Activated CD4-positive, alpha-beta T cell treated with anti-CD3 and anti-CD28 coated beads for 36 hours (primary cell): ENCODE measurements at regions of chr22 and their contacts with region 1.

Region 1: GRCh38 chr22:37166675-37167066 is 17.0 kb upstream of the IL2RB start:
- DNase-seq: peak; percentile 92
- ATAC-seq: peak; percentile 20
- H3K4me3 Mint-ChIP-seq: peak overlapping the region; percentile 53
- H3K27ac Mint-ChIP-seq: peak overlapping the region; percentile 82
- H3K4me1 Mint-ChIP-seq: peaks cover 71% of the 10 kb centered on the region
- H3K27me3 Mint-ChIP-seq: no peaks in the 10 kb centered on the region

Region 2: DNA sequence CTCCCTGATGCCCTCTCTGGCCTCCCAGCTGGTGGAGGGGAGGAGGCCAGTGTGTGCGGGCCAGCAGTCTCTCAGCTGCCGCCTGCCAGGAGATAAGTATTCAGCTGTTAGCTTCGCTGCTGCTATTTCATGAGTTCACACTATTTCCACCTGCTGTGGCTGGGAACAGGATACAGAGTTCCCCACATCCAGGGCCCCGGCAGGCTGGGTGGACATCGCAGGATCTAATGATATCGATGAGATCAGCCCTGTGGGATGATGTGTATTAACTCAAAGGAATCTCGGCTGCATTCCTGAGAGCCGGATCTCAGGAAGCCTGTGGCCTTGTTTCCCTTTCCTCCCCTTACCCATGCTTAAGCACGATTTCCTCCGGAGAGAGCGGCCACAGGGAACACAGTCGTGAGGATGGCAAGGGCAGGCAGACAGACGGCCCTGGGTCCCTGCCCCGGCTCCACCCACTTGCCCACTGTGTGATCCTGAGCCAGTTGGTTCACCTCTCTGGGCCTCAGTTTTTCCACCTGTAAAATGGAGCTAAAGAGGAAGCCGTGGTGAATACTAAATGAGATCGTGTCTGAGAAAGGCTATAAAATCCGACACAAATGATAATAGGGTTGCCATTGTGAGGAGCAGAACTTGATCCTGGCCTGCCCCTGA is 343.4 kb before region 1 on chr22:
- CTCF ChIA-PET with region 1: no interaction called
- POLR2A ChIA-PET with region 1: no interaction called
- intact Hi-C with region 1: no loop called
- DNase-seq: no peak
- ATAC-seq: no peak
- H3K4me3 Mint-ChIP-seq: no peak overlapping the region
- H3K27ac Mint-ChIP-seq: no peak overlapping the region
- H3K4me1 Mint-ChIP-seq: no peaks in the 10 kb centered on the region
- H3K27me3 Mint-ChIP-seq: peaks cover 21% of the 10 kb centered on the region

Region 3: GRCh38 chr22:37060801-37061610 is 105.7 kb before region 1 on chr22:
- CTCF ChIA-PET with region 1: no interaction called
- POLR2A ChIA-PET with region 1: no interaction called
- intact Hi-C with region 1: loop called in 1 of 2 experiments (anchors 1 kb)
- DNase-seq: peak; percentile 90
- ATAC-seq: peak; percentile 85
- H3K4me3 Mint-ChIP-seq: peak overlapping the region; percentile 66
- H3K27ac Mint-ChIP-seq: peak overlapping the region; percentile 80
- H3K4me1 Mint-ChIP-seq: peaks cover 34% of the 10 kb centered on the region
- H3K27me3 Mint-ChIP-seq: no peaks in the 10 kb centered on the region

Region 4: GRCh38 chr22:37095113-37095512 is 71.6 kb before region 1 on chr22:
- CTCF ChIA-PET with region 1: no interaction called
- POLR2A ChIA-PET with region 1: no interaction called
- intact Hi-C with region 1: loop called in 1 of 2 experiments (anchors 1 kb)
- DNase-seq: peak; percentile 87
- ATAC-seq: peak; percentile 87
- H3K4me3 Mint-ChIP-seq: no peak overlapping the region
- H3K27ac Mint-ChIP-seq: peak overlapping the region; percentile 79
- H3K4me1 Mint-ChIP-seq: peaks cover 31% of the 10 kb centered on the region
- H3K27me3 Mint-ChIP-seq: peaks cover 11% of the 10 kb centered on the region

Region 5: DNA sequence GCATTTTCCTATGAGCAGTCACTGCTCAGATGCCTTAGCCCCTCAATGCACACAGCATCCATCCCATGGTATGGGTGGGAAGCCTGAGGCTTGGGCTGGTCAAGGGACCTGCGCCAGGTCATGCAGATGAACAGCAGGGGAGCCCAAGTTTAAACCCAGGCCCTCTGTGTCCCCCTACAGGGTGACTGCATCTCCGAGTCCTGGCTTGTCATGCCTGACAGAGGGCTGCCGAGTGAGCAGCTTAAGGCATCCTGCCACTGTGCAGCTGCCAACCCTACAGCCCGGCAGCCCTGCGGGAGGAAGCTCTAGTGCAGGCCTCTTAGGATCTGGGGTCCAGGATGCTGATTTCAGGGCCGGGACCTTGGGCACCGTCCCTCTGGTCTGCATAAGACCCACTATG is 26.9 kb before region 1 on chr22:
- CTCF ChIA-PET with region 1: interaction called, 18 read pairs
- POLR2A ChIA-PET with region 1: interaction called, 4 read pairs
- intact Hi-C with region 1: loop called in 1 of 2 experiments (anchors 1 kb)
- DNase-seq: no peak
- ATAC-seq: no peak
- H3K4me3 Mint-ChIP-seq: no peak overlapping the region
- H3K27ac Mint-ChIP-seq: peak overlapping the region; percentile 93
- H3K4me1 Mint-ChIP-seq: peaks cover 56% of the 10 kb centered on the region
- H3K27me3 Mint-ChIP-seq: no peaks in the 10 kb centered on the region

Region 6: DNA sequence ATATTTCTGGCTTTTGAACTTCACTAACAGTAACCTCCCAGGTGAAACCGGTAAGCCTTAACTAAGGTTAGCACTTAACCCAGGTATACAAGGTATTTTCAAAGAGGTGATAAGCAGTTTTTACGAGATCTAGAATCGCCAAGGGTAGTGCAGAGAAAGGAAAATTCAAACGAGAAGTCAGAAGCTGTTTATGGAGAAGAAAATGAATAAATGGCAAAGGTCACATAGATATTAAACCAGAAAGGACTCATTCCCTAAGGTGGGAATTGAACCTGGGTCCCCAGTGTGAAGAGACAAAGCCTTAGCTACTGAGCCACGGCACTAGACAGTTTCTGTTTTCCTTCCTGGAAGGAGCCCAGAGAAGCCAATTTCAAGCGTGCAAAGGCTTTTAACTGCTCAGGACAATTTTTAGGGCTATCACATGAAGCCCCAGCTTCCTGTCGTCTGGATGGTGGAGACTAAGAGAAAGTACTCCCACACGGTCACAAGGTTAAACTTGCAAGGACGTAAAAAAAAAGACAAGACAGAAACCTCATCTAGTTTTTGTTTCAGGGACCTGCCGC is 27.0 kb after region 1 on chr22:
- CTCF ChIA-PET with region 1: interaction called, 36 read pairs
- POLR2A ChIA-PET with region 1: interaction called, 5 read pairs
- intact Hi-C with region 1: loop called (anchors 1 kb)
- DNase-seq: peak; percentile 59
- ATAC-seq: peak; percentile 42
- H3K4me3 Mint-ChIP-seq: peak overlapping the region; percentile 40
- H3K27ac Mint-ChIP-seq: peak overlapping the region; percentile 82
- H3K4me1 Mint-ChIP-seq: peaks cover 38% of the 10 kb centered on the region
- H3K27me3 Mint-ChIP-seq: no peaks in the 10 kb centered on the region

Region 7: DNA sequence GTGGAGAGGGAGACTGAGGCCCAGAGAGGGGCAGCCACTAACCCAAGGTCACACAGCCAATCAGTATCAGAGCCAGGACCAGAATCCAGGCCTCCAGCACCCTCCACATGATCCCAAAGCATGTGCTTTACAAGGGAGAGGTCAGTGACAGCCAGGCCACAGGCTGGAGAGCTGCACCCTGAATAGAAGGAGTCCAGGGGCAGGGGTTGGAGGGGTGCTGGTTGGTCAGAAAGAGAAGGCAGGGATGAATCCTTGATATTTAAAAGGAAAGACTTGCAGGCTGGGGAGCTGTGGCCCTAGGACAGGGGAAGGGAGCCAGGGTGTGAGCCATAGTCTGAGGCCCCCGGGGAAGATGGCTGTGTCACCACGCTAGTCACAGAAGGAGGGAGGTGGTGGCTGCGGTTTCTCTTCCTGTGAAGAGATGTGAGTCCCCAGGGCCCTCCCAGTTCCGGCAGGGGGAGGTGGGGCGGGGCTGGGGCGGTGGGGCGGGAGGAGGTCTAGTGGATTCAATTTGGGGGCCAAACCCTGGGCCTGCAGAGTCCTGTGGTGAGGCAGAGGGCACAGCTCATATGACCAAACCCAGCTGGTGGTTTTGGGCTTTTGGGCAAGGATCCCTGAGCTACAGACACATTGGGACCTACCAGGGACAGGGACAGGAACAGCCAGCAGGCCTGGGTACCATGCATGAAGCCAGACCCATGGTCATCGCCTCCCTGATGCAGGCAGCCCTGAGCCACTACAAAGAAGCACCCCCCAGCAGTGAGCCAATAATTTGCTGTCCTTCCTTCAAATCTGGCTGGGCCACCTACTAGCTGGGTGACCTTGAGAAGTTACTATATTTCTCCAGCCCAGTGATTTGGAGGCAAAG is 63.4 kb after region 1 on chr22:
- CTCF ChIA-PET with region 1: interaction called, 3 read pairs
- POLR2A ChIA-PET with region 1: interaction called, 3 read pairs
- intact Hi-C with region 1: loop called in 1 of 2 experiments (anchors 1 kb)
- DNase-seq: peak; percentile 97
- ATAC-seq: peak; percentile 69
- H3K4me3 Mint-ChIP-seq: peak overlapping the region; percentile 92
- H3K27ac Mint-ChIP-seq: peak overlapping the region; percentile 99
- H3K4me1 Mint-ChIP-seq: peaks cover 90% of the 10 kb centered on the region
- H3K27me3 Mint-ChIP-seq: no peaks in the 10 kb centered on the region

Region 8: GRCh38 chr22:37303821-37304274 is 137.2 kb after region 1 on chr22:
- CTCF ChIA-PET with region 1: no interaction called
- POLR2A ChIA-PET with region 1: no interaction called
- intact Hi-C with region 1: no loop called
- DNase-seq: peak; percentile 89
- ATAC-seq: peak; percentile 68
- H3K4me3 Mint-ChIP-seq: peak overlapping the region; percentile 14
- H3K27ac Mint-ChIP-seq: peak overlapping the region; percentile 89
- H3K4me1 Mint-ChIP-seq: peaks cover 84% of the 10 kb centered on the region
- H3K27me3 Mint-ChIP-seq: no peaks in the 10 kb centered on the region

Region 9: DNA sequence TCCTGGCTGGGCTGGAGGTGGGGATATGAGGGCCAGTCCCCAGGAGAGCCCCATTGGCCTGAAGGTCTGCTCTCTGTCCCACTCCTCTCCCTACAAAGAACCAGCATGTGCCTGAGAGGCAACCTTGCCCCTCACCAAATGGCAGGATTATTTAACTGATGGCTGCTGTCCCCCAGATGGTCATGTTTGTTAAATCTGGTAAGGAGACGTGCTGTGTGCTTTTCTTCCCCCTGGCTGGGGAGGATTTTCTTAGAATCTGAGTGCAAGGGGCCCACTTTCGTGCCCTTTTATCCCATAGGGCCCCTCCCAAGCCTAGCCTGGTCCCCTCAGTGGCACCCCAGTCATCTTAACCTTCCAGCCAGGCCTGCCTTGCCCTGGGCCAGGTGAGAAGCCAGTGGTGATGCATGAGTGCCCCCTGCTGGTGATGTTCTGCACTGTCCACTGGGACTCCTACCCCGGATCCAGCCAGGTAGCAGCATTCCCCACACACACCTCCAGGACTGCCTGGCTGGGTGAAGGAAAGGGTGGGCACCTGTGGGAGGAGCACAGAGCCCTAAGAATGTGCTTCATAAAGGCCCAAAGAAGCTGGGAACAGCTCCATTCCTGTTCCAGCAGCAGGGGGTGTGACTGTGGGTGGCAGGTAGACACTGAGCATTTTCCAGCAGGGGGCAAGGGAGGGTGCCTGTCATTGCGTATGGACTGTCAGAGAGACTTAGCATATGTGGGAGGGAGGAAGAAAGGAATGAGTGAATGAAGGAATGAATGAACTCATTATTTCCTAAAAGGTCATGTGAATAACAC is 290.6 kb after region 1 on chr22:
- CTCF ChIA-PET with region 1: no interaction called
- POLR2A ChIA-PET with region 1: no interaction called
- intact Hi-C with region 1: loop called in 1 of 2 experiments (anchors 1 kb)
- DNase-seq: peak; percentile 93
- ATAC-seq: peak; percentile 99
- H3K4me3 Mint-ChIP-seq: no peak overlapping the region
- H3K27ac Mint-ChIP-seq: no peak overlapping the region
- H3K4me1 Mint-ChIP-seq: peaks cover 2% of the 10 kb centered on the region
- H3K27me3 Mint-ChIP-seq: no peaks in the 10 kb centered on the region